ENCODE measurements at regions of chr17 and their contacts with region 1.

Region 1: DNA sequence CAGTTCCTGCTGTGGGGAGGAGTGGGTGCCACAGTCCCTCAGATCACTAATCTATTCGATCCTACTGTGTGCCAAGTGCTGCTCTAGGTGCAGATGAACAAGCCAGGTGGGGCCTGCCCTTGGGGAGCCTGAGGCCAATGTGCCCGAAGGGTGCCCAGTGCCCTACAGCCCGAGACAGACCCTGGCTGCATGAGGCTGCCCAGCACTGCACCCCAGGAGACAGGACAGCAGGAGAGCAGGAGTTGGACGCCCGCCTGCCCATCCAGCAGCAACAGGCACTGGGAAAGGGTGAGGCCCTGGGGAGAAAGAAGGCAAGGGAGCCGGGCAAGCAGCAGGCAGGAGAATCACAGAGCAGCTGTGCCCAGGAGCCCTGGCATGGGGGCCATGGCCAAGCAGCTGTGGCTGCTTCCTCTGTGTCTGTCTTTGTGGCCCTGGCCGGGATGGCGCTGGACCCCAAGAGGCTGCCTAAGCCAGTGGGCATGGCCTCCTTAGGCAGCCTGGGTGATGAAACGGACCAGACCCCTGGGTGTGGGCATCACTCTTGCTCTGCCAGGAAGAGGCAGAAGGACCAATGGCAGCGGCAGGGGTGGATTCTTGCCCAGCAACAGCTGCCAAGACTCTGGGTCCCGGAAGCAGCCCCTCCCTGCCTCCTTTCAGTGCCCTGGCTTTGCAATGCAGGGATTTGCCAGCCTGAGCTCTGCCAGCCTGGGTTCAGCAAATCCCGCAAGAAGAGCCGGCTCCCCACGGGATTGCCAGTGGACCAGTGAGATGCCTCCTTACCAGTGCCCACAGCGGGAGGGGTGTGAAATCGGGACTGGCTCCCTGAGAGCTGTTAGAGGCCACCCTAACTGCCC is 179.6 kb upstream of the TNRC6C start:
- DNase-seq: peak; percentile 71 to 83
- ATAC-seq: peak; percentile 86 to 97 (median 94)
- H3K4me3 ChIP-seq: peak overlapping the region in 5 of 10 donors; percentile 3 to 21 (median 15)
- H3K27ac ChIP-seq: peak overlapping the region in 9 of 10 donors; percentile 38 to 85 (median 79)
- H3K4me1 ChIP-seq: peaks cover 10 to 30% (median 23%) of the 10 kb centered on the region in 9 donors
- H3K27me3 ChIP-seq: no peaks in the 10 kb centered on the region
- CTCF ChIP-seq: no peak

Region 2: DNA sequence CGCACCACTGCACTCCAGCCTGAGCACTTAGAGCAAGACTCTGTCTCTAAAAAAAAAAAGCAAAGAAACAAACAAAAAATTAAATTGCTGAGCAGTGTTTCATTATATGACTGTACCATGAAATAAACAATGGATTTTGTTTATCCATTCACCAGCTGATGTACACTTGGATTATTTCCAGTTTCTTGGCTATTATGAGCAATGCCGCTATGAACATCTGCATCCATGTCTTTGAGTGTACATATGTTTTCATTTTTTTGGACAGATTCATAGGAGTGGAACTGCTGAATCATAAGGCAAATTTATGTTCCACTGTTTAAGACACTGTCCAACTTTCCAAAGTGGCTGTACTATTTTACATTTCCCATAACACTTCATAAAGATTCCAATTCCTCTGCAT is 1546.5 kb before region 1 on chr17:
- intact Hi-C with region 1: loop called in 1 of 10 experiments (anchors 5 kb)
- DNase-seq: no peak
- ATAC-seq: no peak
- H3K4me3 ChIP-seq: no peak overlapping the region
- H3K27ac ChIP-seq: no peak overlapping the region
- H3K4me1 ChIP-seq: no peaks in the 10 kb centered on the region
- H3K27me3 ChIP-seq: no peaks in the 10 kb centered on the region
- CTCF ChIP-seq: no peak

Region 3: DNA sequence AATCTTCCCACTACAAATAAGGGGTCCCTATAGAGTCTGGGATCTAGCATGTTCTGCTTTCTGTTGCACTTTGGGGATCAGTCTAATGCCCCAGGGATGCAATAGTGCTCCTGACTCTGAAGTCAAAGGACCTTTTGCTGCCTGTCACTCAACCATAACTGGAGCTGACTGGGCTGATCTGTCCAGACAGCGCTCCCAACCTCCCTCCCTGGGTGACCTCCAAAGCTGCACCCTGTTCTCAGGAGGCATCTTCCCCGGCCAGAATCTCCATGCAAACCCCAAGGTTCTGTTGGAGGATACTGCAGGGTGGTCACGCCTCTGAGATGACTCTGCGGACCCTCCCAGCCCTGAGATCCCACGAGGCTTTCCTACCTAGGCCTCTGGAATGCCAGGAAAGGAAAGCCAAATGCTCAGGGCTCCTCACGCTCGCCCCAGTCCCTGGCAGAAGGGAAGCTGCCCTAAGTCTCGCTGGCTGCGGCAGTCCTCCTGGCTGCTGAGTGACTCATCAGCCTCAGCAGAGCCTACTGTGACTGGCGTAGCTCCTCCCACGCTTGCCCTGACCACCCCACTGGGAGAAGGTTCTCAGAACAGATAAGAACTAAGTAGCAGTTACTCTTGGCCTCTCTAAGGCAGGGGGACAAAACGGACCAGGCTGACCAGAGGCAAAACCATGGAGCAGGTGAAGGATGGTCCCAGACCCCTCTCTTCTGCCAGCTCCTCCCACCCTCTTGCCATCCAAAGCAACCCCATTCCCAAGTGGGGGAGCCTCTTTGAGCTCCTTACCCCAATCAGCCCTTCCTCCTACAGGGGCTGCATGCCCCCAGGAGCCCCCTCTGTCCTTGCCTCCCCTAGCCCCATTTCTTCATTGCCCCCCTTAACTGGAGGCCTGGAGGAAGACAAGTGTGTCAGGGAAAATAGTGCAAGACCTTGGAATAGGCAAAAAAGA is 55.6 kb after region 1 on chr17:
- intact Hi-C with region 1: loop called in 1 of 10 experiments (anchors 5 kb)
- DNase-seq: peak; percentile 67 to 68
- ATAC-seq: peak in 7 of 8 donors; percentile 15 to 70 (median 35)
- H3K4me3 ChIP-seq: peak overlapping the region in 1 of 10 donors; percentile 10
- H3K27ac ChIP-seq: peak overlapping the region in 7 of 10 donors; percentile 19 to 70 (median 56)
- H3K4me1 ChIP-seq: peaks cover 28 to 63% (median 48%) of the 10 kb centered on the region in 9 donors
- H3K27me3 ChIP-seq: peaks cover 0 to 3% (median 0%) of the 10 kb centered on the region in 7 donors
- CTCF ChIP-seq: no peak

Region 4: DNA sequence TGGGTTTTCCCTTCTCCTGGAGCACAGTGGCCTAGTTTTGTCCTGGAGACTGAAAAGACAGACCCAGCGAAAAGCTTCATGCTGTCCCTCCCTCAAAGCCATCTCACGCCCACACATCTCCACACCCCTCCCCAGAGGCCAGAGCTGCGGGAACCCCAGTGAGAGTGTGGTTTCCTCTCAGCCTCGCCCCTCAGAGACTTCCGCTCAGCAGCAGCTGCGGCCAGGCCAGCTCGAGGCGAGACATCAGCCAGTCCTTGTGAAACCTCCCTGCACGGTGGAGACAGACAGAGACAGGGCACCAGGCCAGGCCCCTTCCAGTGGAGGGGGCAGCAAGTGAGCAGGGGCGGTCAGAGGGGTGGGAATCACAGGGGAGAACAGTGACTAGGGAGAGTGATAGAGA is 102.7 kb after region 1 on chr17:
- intact Hi-C with region 1: loop called in 4 of 10 experiments (anchors 10 kb)
- DNase-seq: peak; percentile 89
- ATAC-seq: peak; percentile 83 to 94 (median 92)
- H3K4me3 ChIP-seq: peak overlapping the region in 2 of 10 donors; percentile 10 to 13
- H3K27ac ChIP-seq: peak overlapping the region in 9 of 10 donors; percentile 58 to 93 (median 77)
- H3K4me1 ChIP-seq: peaks cover 25 to 57% (median 37%) of the 10 kb centered on the region in 9 donors
- H3K27me3 ChIP-seq: no peaks in the 10 kb centered on the region
- CTCF ChIP-seq: no peak

Measured in heart right ventricle (tissue), 16 donors.